Activated CD8-positive, alpha-beta T cell treated with anti-CD3 and anti-CD28 coated beads, Interleukin-2, amount 10 ng/mL, durations not matched to agents 7 days and 5 days (primary cell): ENCODE measurements at regions of chr16 and their contacts with region 1.

Region 1: DNA sequence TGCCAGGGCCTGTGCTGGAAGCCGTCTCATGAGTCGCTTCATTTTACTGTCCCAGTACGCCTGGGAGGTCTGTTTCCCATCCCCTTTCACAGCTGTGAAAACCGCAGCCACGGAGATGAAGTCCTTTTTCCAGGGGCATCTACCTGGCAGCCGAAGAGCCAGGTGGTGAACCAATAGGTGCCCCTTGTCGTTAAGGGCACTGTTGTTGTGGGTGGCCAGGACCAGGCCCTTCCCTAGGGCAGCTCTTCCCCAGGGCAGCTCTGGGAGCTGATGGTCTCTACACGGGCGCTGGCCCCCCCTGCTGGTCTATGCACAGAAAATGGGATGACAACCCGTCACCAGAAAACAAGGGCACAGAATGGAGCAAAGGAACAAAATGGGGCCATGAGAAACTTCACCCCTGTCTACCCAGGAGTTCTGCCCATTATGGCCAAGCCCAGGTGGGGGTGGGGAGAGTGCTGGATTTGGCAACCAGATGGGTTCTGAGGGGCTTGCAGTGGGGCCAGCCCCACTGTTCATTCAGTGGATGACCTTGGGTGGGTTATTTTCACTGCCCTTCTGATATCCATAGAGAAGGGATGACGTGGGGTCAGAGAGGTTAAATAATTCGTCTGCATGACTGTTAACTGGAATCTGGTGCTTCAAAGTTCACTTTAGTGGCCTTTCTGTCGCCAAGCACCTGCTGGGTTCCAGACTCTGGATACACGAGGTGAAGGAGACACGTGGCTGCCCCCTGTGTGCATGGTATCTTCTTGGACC is 11.5 kb downstream of the RMI2 start:
- DNase-seq: peak; percentile 68
- ATAC-seq: no peak
- H3K4me3 Mint-ChIP-seq: peak overlapping the region; percentile 76
- H3K27ac Mint-ChIP-seq: peak overlapping the region; percentile 65
- H3K4me1 Mint-ChIP-seq: peaks cover 91% of the 10 kb centered on the region
- H3K27me3 Mint-ChIP-seq: peaks cover 5% of the 10 kb centered on the region

Region 2: DNA sequence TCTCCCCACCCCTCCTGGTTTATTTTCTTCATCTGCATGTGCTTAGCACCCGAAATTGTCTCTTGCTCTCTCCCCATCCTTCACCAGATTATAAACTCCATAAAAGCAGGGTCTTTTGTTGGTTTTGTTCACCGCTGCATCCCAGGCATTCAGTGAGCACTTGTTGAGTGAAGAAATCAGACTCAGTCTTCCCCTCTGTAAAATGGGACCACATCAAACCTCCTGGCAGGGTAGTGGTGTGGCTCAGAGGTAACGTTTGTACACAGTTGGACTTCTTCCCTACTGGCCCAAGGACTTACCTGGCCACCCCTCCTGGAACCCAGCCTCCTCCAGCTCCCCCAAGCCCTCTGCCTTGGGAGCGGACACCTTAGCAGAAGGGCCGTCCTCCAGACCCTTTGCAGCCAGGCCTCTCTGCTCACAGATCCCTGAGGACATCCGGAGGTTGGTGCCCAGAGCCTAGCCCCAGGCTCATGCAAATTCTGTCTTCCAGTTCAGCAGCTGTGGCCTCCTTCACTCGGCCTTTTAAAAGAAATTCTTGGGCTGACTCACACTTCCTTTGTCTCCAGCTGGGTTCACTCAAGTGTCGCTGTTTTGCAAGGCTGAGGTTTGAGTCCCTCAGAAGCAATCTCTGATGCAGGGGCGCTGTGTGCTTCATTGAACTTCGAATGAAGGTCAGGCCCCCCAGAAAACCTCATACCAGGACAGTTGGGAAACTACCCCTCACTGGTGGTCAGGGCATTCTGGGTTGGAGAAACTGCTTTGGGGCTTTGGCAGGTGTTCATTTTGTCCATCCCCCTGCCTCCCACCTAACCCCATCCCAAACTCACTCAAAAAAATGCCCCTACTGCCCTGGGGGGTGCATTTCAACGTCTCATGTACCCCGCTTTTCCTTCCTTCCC is 28.3 kb before region 1 on chr16:
- CTCF ChIA-PET with region 1: interaction called, 12 read pairs
- POLR2A ChIA-PET with region 1: interaction called, 3 read pairs
- DNase-seq: peak; percentile 77
- ATAC-seq: peak; percentile 85
- H3K4me3 Mint-ChIP-seq: peak overlapping the region; percentile 38
- H3K27ac Mint-ChIP-seq: peak overlapping the region; percentile 84
- H3K4me1 Mint-ChIP-seq: peaks cover 68% of the 10 kb centered on the region
- H3K27me3 Mint-ChIP-seq: no peaks in the 10 kb centered on the region